RWPE1 (cell line): ENCODE measurements at regions of chr2 and their contacts with region 1.

Region 1: DNA sequence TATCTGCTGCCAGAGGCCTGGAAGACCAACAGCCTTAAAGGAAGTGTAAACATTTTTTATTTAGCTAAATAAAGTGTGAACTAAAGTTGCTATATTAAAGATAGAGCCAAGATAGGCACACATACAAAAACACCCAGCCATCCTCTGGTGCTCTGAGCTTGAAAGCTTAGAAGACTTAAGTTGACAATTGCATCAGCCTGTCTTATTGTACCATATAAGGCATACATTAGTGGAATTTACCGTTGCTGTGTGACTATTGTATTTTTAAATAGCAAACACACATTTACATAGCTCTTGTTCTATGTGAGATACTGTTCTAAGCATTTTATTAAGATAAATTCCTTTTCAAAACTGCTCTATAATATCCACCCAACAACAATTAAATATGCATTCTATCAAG is 736.6 kb upstream of the ZEB2 start:
- DNase-seq: no peak
- H3K27ac ChIP-seq: no peak overlapping the region
- CTCF ChIP-seq: no peak

Region 2: DNA sequence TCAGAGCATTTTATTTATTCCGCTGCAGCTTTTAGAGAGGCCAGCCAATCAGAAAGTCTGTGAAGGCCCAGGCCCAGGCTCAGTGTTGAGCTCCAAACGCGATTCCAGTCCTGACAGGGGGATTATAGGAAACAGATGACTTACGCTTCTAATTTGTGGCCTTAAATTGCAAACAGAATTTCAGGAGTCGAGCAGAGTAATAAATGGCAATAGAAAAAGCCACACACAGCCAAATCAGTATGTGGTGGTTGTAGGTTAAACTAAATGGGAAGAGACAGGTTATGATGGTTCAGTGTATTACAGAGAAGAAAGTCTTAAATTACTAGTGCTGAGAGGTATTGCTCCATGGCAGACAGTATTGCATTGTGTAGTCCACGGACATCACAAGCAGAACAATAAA is 605.6 kb before region 1 on chr2:
- CTCF ChIA-PET with region 1: interaction called, 10 read pairs
- POLR2A ChIA-PET with region 1: no interaction called
- DNase-seq: no peak
- H3K27ac ChIP-seq: no peak overlapping the region
- CTCF ChIP-seq: no peak

Region 3: GRCh38 chr2:144996225-144996795 is 260.2 kb before region 1 on chr2:
- CTCF ChIA-PET with region 1: no interaction called
- POLR2A ChIA-PET with region 1: no interaction called
- DNase-seq: peak; percentile 19
- H3K27ac ChIP-seq: no peak overlapping the region
- CTCF ChIP-seq: no peak

Region 4: GRCh38 chr2:145235312-145235711 is 21.2 kb before region 1 on chr2:
- CTCF ChIA-PET with region 1: no interaction called
- POLR2A ChIA-PET with region 1: no interaction called
- DNase-seq: no peak
- H3K27ac ChIP-seq: no peak overlapping the region
- CTCF ChIP-seq: no peak

Region 5: DNA sequence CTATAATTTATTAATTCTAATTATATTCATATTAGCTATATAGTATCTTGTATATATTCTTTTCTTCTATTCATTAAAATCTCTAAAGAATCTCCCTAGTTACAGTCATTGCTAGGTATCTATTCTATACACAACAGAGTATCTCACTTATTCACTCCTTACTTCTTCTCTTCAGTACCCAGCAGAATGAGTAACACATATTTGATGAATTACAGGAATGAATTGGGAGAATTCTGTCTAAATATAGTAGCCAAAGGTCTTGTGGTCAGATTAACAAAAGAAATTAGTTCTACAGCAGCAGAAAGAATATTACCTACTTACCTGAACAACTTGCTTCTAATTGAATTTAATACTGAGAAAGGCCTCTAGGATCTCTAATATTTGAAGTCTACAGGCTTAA is 21.4 kb after region 1 on chr2:
- CTCF ChIA-PET with region 1: no interaction called
- POLR2A ChIA-PET with region 1: no interaction called
- DNase-seq: no peak
- H3K27ac ChIP-seq: no peak overlapping the region
- CTCF ChIP-seq: no peak

Region 6: DNA sequence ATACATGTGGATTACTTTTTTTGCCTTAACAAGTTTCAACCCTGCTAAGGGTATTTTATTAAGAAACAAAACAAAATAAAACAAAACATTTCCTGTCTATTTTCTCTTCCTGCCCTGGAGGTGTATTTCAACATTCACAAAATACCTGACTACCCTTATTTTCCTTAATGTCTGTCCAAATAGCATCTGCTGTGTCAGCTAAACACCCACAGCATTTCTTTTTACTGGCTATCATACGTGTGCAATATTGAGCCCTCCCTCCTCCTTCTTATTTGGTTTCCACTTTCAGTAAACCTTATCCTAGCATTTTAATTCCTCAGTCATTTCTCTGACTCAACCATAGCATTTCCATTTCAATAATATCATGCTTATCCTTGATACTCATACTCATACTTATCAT is 683.4 kb after region 1 on chr2:
- CTCF ChIA-PET with region 1: no interaction called
- POLR2A ChIA-PET with region 1: no interaction called
- DNase-seq: peak; percentile 11
- H3K27ac ChIP-seq: no peak overlapping the region
- CTCF ChIP-seq: no peak